Testis (tissue), 5 donors: ENCODE measurements at regions of chr10 and their contacts with region 1.

Region 1: GRCh38 chr10:110311357-110311949 is 6.7 kb upstream of the SMNDC1 start:
- DNase-seq: peak; percentile 50
- H3K4me3 ChIP-seq: no peak overlapping the region
- H3K27ac ChIP-seq: no peak overlapping the region
- H3K4me1 ChIP-seq: no peaks in the 10 kb centered on the region
- H3K27me3 ChIP-seq: no peaks in the 10 kb centered on the region
- CTCF ChIP-seq: peak in 2 of 3 experiments; percentile 45 to 68
- POLR2A ChIP-seq: no peak

Region 2: GRCh38 chr10:110225756-110226542 is 85.5 kb before region 1 on chr10:
- intact Hi-C with region 1: no loop called
- DNase-seq: peak; percentile 94
- H3K4me3 ChIP-seq: peak overlapping the region; percentile 76 to 87
- H3K27ac ChIP-seq: peak overlapping the region; percentile 91 to 97
- H3K4me1 ChIP-seq: peaks cover 13% of the 10 kb centered on the region
- H3K27me3 ChIP-seq: no peaks in the 10 kb centered on the region
- CTCF ChIP-seq: peak; percentile 55 to 84 (median 73)
- POLR2A ChIP-seq: no peak

Region 3: GRCh38 chr10:110471566-110472139 is 160.2 kb after region 1 on chr10:
- intact Hi-C with region 1: no loop called
- DNase-seq: no peak
- H3K4me3 ChIP-seq: no peak overlapping the region
- H3K27ac ChIP-seq: no peak overlapping the region
- H3K4me1 ChIP-seq: no peaks in the 10 kb centered on the region
- H3K27me3 ChIP-seq: no peaks in the 10 kb centered on the region
- CTCF ChIP-seq: no peak
- POLR2A ChIP-seq: no peak

Region 4: DNA sequence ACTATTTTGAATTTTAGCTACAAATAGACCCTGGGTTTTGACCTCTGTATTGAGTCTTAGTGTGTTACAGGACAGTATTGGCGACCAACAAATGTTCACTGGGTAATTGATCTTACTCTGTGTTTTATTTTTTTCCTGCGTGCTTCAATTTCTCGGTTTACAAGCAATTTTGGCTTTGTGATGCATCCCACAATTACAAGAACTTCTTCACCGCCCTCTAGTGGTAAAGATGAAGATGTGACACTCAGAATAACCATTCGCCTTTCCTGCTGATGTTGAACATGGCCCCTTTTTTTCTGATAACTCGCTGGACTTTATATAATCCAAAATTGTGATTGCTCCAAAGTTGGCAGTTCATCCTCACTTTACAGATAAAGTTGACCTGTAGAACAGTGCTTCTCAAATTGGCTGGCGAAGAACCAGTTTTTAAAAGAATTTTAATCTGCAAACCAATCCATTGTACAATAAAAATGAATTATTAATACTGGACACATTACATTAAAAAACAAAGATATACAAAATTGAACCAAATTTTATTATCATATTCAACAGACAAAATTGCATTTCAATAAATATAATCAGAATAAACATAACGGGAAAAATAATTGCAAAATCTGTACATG is 235.8 kb after region 1 on chr10:
- intact Hi-C with region 1: loop called (anchors 10 kb)
- DNase-seq: no peak
- H3K4me3 ChIP-seq: no peak overlapping the region
- H3K27ac ChIP-seq: no peak overlapping the region
- H3K4me1 ChIP-seq: no peaks in the 10 kb centered on the region
- H3K27me3 ChIP-seq: no peaks in the 10 kb centered on the region
- CTCF ChIP-seq: peak; percentile 78 to 87 (median 82)
- POLR2A ChIP-seq: no peak

Region 5: GRCh38 chr10:110944792-110945396 is 633.4 kb after region 1 on chr10:
- intact Hi-C with region 1: no loop called
- DNase-seq: no peak
- H3K4me3 ChIP-seq: no peak overlapping the region
- H3K27ac ChIP-seq: no peak overlapping the region
- H3K4me1 ChIP-seq: no peaks in the 10 kb centered on the region
- H3K27me3 ChIP-seq: no peaks in the 10 kb centered on the region
- CTCF ChIP-seq: no peak
- POLR2A ChIP-seq: no peak